ENCODE measurements at regions of chr10 and their contacts with region 1.

Region 1: DNA sequence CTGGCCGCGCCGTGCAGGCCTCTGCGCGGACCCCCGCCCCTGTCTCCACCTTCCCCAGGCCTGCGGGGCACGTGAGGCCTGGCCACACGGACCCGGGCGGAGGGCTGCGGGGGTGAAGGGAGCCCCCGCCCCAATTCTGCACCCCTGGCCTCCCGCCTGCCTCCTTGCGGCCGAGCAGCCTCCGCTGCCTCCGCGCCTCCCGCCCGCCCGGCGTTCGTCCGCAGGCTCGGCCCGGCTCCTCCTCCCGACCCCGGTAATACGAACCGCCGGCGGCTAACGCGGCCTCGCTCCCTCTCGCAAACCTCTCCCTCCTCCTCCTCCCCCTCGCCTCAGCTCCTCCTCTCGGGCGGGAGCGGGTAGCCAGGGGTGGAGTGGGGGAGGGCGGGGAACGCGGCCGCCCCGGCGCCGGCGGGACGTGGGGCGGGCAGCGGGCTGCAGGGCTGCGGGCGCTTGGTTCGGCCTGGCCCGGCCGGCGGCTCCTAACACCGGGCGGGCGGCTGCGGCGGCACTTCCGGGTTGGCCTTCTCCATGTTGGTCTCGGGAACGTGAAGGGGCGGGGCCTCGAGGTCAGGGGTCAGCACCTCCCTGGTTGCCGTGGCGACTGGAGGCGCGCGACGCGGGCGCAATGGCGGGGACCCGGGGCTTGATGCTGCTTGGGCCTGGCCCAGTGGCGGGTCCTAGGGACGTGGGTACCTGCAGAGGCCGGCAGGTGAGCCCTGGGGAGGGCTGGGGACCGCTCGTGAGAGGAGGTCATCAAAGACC is at the start of gene RAB11FIP2:
- DNase-seq: peak; percentile 98
- ATAC-seq: peak; percentile 95
- total RNA-seq, gene RAB11FIP2: 12.8 TPM

Region 2: DNA sequence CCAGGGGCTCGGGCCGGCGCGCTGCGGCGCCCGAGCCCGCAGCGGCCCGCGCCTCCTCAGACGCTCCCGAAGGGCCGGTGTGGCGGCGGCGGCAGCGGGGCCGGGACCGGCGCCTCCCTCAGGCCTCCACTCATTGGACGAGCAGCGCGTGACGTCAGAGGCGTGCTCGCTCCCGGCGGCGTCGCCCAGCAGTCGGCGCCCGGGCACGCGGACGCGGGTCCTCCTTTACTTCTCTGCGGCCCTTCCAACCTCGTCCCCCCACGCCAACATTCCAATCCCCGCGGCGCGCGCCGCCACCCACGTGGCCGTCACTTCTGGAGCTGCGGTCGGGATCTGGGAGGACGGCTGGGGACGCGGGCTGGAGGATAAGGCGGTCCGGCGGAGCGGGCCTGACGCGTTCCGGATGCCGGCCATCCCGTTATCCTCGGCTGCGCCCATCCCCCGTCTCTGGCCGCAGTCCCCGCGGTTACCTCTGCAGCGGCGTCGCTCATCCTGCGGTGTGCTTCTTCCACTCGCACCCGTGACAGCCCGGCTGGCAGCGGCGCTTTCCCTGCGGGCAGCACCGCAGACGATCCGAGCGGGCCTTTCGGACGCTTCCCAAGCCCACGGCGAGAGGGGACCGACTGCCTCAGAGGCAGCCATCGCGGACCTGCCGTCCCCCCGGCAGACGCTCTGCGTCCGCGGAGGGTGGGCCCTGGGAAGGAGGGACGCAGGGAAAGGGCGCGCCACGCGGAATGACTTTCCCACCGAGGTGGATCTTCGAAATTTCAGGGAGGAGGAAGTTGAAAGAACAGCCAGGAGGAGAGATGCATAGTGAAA is 671.0 kb before region 1 on chr10 and contains the start of gene PDZD8:
- intact Hi-C with region 1: loop called (anchors 10 kb)
- DNase-seq: peak; percentile 98
- ATAC-seq: peak; percentile 98
- total RNA-seq, gene PDZD8: 20.0 TPM

Region 3: DNA sequence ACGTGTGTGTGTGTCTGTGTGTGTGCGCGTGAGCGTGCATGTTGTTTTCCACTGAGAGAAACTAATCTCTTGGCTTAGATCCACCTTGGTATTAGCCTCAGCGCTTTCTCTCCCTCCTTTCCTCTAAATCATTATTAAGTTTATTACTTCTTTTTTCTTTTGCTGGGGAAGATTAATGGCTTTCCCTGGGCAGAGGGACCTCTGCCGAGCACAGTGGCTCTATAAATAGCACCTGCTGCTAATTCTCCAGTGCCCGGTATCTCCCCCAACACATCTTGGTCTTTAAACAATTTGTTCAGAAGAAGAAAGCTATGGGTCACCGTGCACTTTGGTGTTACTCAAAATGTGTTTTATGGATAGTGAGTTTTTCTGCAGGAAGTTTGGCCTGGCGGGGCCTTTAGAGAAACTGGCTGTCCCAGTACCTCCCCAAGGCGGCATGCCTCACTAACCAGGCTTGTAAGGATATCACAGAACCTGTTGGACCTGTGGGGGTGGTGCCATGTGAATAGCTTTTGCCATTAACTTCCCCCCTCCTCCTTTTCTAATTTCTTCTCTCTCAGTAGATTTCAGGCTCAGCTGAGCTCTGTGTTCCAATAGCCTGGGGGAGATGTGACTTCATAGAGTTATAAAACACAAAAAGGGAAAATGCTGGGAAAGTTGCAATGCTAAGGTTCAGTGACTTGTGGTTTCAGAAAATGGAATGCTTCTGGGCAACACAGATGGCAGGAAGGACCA is 70.3 kb after region 1 on chr10:
- intact Hi-C with region 1: loop called (anchors 5 kb)
- DNase-seq: no peak
- ATAC-seq: peak; percentile 15

Region 4: GRCh38 chr10:118332236-118332635 is 285.7 kb after region 1 on chr10:
- intact Hi-C with region 1: loop called (anchors 10 kb)
- DNase-seq: no peak
- ATAC-seq: no peak

Measured in Right ventricle myocardium inferior (tissue), 1 donor.